Activated T-helper 1 cell treated with anti-CD3 and anti-CD28 coated beads, Interleukin-12 subunit alpha, Interleukin-12 subunit beta, Interleukin-2, Interleukin-4 antibody, amounts not matched to agents 30 ng/mL and 10 ng/mL and 1 ng/mL, durations not matched to agents 14 hours and 24 hours and 36 hours (primary cell): ENCODE measurements at regions of chr20 and their contacts with region 1.

Region 1: DNA sequence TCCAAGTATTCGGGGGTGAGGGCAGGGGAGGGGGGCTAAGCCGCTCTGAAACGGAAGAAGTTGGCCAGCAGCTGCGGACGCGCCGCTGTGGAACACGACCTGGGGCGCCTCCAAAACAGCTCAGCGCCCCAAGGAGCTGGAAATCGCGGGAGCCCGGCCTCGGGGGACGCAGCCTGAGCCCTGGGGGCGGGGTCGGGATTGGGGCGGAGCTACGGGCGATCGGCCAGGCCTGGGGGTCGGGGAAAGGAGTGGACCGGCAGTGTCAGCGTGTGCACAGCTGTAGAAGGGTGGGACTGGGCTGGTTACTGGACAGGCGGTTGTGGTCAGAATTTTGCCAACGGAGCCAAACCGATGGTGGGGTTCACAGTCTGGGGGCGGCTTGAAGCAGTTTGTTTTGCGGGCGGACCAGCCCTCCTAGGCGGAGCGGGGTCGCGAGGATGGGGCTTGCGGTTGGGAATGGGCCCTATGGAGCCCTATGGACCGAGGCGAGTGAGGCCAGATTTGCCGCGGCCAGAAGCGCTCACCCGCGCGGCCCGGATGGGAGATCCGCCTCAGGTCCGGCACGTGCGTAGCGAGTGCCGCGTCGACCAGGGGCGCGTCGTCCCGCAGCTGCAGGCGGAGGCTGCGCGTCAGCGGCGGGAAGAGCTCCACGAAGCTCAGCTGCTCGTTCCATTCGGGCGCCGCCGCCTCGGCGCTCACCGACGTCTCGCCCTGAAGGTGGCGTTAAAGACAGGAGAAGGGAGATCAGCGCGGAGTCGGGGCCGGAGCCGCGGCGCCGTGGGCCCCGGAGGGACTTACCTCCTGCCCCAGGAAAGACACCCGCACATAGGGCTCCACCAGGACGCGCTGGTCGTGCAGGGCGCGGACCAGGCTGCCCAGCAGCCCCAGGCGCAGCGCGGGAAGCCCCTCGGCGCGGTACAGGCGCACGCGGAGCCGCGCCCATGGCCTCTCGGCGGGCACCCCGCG is 14.3 kb upstream of the SPAG4 start:
- DNase-seq: peak; percentile 70
- H3K4me3 Mint-ChIP-seq: peak overlapping the region; percentile 72
- H3K27ac Mint-ChIP-seq: peak overlapping the region; percentile 31
- H3K4me1 Mint-ChIP-seq: no peaks in the 10 kb centered on the region
- H3K27me3 Mint-ChIP-seq: peaks cover 32% of the 10 kb centered on the region

Region 2: GRCh38 chr20:35463455-35464300 is 137.6 kb before region 1 on chr20:
- intact Hi-C with region 1: loop called (anchors 5 kb)
- DNase-seq: peak; percentile 48
- H3K4me3 Mint-ChIP-seq: no peak overlapping the region
- H3K27ac Mint-ChIP-seq: no peak overlapping the region
- H3K4me1 Mint-ChIP-seq: no peaks in the 10 kb centered on the region
- H3K27me3 Mint-ChIP-seq: no peaks in the 10 kb centered on the region

Region 3: DNA sequence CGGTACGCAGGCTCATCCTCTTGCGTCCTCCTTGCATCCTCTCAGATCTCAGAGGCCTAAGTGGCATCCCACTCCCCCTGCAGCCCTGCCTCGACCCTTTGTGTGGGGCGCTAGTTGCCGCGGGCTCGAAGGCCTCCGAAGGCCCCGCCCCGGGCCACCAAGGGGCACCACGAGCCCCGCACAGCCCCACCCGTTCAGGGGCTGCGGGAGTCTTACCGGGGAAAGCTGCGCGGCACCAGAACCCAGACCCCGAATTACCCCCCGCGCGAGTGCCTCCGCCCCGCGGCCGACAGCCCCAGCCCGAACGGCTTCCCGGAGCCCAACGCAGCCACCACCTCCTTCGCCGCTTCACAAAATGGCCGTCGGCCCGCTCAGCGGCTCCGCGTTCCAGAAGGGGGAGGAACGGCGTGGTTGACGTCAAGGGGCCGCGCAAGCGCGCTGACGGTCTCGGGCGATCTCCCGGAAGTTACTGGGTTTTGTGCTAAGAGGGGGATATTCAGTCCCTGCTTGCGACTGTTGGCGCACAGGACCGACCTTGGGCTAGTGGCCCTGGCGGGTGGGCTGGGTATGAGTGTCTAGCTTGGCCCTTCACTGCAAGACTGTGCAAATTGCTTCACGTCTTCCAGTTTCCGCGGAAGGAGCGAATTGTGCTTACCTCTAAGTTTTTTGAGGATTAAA is 63.4 kb after region 1 on chr20 and contains the starts of genes CPNE1 and RBM12:
- intact Hi-C with region 1: loop called (anchors 5 kb)
- DNase-seq: peak; percentile 91
- H3K4me3 Mint-ChIP-seq: peak within 1 kb of the TSS; percentile 95
- H3K27ac Mint-ChIP-seq: peak within 1 kb of the TSS; percentile 99
- H3K4me1 Mint-ChIP-seq: peaks cover 48% of the 10 kb centered on the region
- H3K27me3 Mint-ChIP-seq: no peaks in the 10 kb centered on the region
- total RNA-seq, gene CPNE1: 304 and 308 TPM in 2 replicates
- total RNA-seq, gene RBM12: 151 and 168 TPM in 2 replicates

Region 4: DNA sequence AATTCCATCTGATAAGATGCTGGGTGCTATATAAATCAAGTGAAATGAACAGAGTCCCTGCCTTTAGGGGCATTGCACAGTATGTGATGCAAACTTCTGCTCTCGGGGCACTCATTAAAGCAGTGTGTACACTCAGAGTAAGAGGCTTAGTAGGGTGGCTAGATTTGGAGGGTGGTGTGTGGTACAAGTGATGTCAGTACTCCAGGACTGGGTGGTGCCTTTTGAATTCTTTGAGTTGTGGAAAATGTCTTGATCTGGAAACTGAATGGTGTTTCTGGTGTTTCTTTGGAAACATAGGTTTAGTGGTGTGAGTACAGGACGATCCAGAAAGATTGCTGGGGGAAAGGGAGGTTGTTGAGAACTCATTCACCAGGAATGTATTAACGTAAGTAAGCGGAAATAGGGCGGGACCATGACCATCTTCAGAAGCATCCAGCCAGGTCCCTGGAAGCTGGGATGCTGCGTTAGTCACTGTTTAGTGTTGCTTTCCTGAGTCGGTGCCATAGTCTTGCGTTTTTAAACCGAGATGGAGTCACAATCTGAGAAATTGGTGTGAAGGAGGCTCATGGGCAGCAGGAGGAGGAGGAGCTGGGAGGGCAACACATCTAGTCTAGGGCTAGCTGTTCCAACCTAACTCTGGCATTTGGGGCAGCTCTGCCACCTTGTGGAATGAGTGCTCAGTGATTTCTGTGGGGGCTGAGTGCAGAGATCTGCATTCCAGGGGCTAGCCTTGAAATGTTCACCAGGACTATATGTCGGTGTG is 282.7 kb after region 1 on chr20:
- intact Hi-C with region 1: loop called (anchors 1 kb)
- DNase-seq: peak; percentile 31
- H3K4me3 Mint-ChIP-seq: no peak overlapping the region
- H3K27ac Mint-ChIP-seq: no peak overlapping the region
- H3K4me1 Mint-ChIP-seq: peaks cover 7% of the 10 kb centered on the region
- H3K27me3 Mint-ChIP-seq: no peaks in the 10 kb centered on the region